ENCODE measurements at regions of chr4 and their contacts with region 1.

Region 1: GRCh38 chr4:184143770-184144564 is 73.7 kb downstream of the ENPP6 start:
- DNase-seq: no peak
- H3K4me3 ChIP-seq: no peak overlapping the region
- H3K27ac ChIP-seq: no peak overlapping the region
- H3K4me1 ChIP-seq: no peaks in the 10 kb centered on the region
- H3K27me3 ChIP-seq: no peaks in the 10 kb centered on the region; a peak in 2 of 7 replicates
- CTCF ChIP-seq: peak; percentile 46 to 65 (median 61)
- EP300 ChIP-seq: no peak
- POLR2A ChIP-seq: no peak
- RAD21 ChIP-seq: peak; percentile 42 to 54; a peak in 3 of 4 replicates

Region 2: GRCh38 chr4:183840311-183840710 is 303.7 kb before region 1 on chr4:
- CTCF ChIA-PET with region 1: interaction called, 11 read pairs
- POLR2A ChIA-PET with region 1: no interaction called
- DNase-seq: peak in 1 of 2 experiments; percentile 86
- H3K4me3 ChIP-seq: no peak overlapping the region
- H3K27ac ChIP-seq: no peak overlapping the region
- H3K4me1 ChIP-seq: peaks cover 0 to 2% (median 0%) of the 10 kb centered on the region in 4 experiments; a peak in 1 of 7 replicates
- H3K27me3 ChIP-seq: no peaks in the 10 kb centered on the region
- CTCF ChIP-seq: peak; percentile 57 to 87 (median 87)
- EP300 ChIP-seq: no peak
- POLR2A ChIP-seq: no peak
- RAD21 ChIP-seq: peak; percentile 97 to 99

Region 3: GRCh38 chr4:183960962-183961541 is 182.9 kb before region 1 on chr4:
- CTCF ChIA-PET with region 1: no interaction called
- POLR2A ChIA-PET with region 1: no interaction called
- DNase-seq: no peak
- H3K4me3 ChIP-seq: no peak overlapping the region
- H3K27ac ChIP-seq: no peak overlapping the region
- H3K4me1 ChIP-seq: peaks cover 0 to 3% (median 1%) of the 10 kb centered on the region in 4 experiments; a peak in 3 of 7 replicates
- H3K27me3 ChIP-seq: no peaks in the 10 kb centered on the region
- CTCF ChIP-seq: no peak
- EP300 ChIP-seq: no peak
- POLR2A ChIP-seq: no peak
- RAD21 ChIP-seq: no peak

Region 4: DNA sequence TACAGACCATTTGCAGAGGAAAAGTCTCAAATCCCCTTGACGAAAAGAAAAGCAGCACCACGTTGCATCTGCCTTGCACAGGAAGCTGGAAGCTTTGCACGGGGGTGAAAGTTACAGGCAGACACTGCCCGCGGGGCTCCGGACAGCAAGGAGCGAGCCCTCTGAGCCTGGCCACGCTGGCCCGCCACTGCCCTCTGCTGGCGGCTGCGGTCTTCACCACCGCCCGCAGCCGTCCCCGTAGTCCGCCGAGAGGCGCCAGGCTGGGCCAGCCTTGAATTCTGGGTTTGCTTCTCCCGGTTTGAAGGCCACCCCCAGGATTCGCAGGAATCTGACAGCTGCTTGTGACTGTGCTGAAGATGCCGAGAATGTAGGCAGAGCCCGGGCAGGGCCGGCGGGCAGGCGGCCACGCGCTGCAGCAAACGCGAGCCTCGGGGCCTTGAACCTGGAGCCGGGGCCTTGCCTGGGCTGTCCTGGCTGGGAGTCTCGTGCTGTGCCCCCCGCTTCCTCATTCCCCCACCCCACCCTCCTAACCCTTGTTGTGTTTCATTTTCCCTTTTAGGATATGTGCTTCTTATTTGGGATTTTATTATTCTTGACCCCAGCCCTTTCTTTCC is 24.5 kb after region 1 on chr4:
- CTCF ChIA-PET with region 1: interaction called, 22 read pairs
- POLR2A ChIA-PET with region 1: interaction called, 3 read pairs
- DNase-seq: peak; percentile 77 to 92
- H3K4me3 ChIP-seq: peak overlapping the region in 1 of 4 experiments; percentile 41; a peak in 2 of 8 replicates
- H3K27ac ChIP-seq: no peak overlapping the region
- H3K4me1 ChIP-seq: peaks cover 12 to 28% (median 17%) of the 10 kb centered on the region in 4 experiments
- H3K27me3 ChIP-seq: no peaks in the 10 kb centered on the region; a peak in 2 of 7 replicates
- CTCF ChIP-seq: peak; percentile 91 to 96 (median 92)
- EP300 ChIP-seq: 0 out of 3 replicates have a peak, but pooled peaks of 1 of the 2 experiments have one; percentile 33
- POLR2A ChIP-seq: no peak
- RAD21 ChIP-seq: peak; percentile 78 to 86

Measured in H1 (cell line).